Natural killer cell (primary cell): ENCODE measurements at regions of chr17 and their contacts with region 1.

Region 1: GRCh38 chr17:20116683-20117309 is 107.6 kb downstream of the SPECC1 start:
- DNase-seq: peak; percentile 19 to 85
- ATAC-seq: peak; percentile 77 to 91 (median 85)
- H3K4me3 ChIP-seq: no peak overlapping the region
- H3K4me3 Mint-ChIP-seq: no peak overlapping the region
- H3K27ac ChIP-seq: no peak overlapping the region
- H3K27ac Mint-ChIP-seq: no peak overlapping the region
- H3K4me1 ChIP-seq: no peaks in the 10 kb centered on the region
- H3K4me1 Mint-ChIP-seq: peaks cover 0 to 3% of the 10 kb centered on the region in 2 donors
- H3K27me3 ChIP-seq: no peaks in the 10 kb centered on the region
- H3K27me3 Mint-ChIP-seq: no peaks in the 10 kb centered on the region
- CTCF ChIP-seq: peak; percentile 84

Region 2: DNA sequence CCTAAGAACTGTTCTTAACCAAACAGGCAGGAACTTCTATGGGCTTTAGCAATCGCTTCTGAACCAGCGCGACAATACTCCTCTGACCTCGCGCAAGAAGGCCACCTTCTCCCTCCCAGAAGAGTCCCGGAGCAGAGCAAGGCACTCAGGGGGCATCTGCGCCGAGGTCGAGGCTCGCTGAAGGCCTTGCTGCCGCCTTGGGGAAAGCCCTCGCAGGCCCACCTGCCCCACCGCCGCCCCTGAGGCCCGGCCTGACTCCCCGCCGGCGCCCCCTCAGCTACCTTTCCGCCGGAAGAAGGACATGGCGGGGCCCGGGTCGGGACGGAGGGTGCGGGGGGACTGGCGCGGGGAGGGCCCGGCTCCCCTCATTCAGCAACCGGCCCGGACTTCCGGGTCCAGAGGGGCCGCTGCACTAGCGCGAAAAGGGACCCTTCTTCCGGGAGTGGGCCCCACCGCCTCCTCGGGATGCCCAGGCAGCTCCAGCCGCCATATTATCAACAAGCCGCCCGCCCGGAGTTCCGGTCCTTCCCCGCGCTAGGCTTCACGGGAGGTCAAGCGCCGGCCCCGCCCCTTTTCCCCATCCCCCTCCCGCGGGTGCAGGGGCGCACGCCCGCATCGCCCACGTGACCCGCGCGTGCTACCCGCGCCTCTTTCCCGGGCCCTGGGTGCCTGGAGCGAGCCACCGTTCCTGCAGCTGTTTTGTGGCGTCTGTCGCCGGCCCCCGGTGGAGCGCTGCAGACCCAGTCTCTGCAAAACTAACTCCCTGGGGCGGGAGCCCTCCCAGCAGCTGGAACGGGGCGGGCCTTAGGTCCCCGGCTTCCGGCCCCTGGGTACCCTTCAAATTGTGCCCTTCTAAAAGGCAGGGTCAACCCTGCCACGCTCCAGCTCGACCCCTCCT is 139.2 kb before region 1 on chr17 and contains the start of gene AKAP10:
- intact Hi-C with region 1: loop called (anchors 5 kb)
- DNase-seq: peak; percentile 91 to 92
- ATAC-seq: peak; percentile 90 to 94 (median 91)
- H3K4me3 ChIP-seq: peak within 1 kb of the TSS; percentile 71
- H3K4me3 Mint-ChIP-seq: peak within 1 kb of the TSS; percentile 98
- H3K27ac ChIP-seq: peak within 1 kb of the TSS; percentile 88
- H3K27ac Mint-ChIP-seq: peak within 1 kb of the TSS; percentile 95 to 96
- H3K4me1 ChIP-seq: peaks cover 20% of the 10 kb centered on the region
- H3K4me1 Mint-ChIP-seq: peaks cover 33 to 44% of the 10 kb centered on the region in 2 donors
- H3K27me3 ChIP-seq: no peaks in the 10 kb centered on the region
- H3K27me3 Mint-ChIP-seq: no peaks in the 10 kb centered on the region
- CTCF ChIP-seq: no peak
- total RNA-seq, gene AKAP10: 46.2 to 60.9 (median 48.6) TPM

Region 3: DNA sequence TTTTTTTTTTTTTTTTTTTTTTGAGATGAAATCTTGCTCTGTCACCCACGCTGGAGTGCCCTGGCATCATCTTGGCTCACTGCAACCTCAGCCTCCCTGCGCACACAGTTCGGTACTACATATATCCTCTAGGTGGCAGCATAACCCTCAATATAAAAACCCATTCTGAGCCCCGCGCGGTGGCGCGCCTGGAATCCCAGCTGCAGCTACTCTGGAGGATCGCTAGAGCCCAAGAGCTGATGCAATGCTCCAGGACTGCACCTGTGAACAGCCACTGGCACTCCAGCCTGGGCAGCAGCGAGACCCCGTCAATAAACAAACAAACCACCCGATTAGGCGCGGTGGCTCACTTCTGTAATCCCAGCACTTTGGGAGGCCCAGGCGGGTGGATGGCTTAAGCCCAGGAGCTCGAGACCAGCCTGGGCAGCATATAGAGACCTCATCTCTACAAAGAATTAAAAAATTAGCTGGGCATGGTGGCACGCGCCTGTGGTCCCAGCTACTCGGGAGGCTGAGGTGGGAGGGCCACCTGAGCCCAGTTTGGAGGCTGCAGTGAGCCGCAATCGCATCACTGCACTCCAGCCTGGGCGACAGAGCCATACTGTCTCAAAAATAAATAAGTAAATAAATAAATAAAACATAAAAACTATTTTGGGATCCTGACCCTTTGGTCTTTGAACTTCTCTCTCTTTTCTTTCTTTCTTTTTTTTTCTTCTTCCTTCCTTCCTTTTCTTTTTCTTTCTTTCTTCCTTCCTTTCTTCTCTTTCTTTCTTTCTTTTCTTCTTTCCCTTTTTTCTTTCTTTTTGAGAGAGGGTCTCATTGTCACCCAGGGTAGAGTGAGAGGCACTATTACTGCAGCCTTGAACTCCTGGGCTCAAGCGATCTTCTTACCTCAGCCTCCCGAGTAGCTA is 123.7 kb before region 1 on chr17:
- intact Hi-C with region 1: loop called (anchors 1 kb)
- DNase-seq: peak; percentile 63 to 89
- ATAC-seq: peak; percentile 96 to 100 (median 99)
- H3K4me3 ChIP-seq: no peak overlapping the region
- H3K4me3 Mint-ChIP-seq: no peak overlapping the region
- H3K27ac ChIP-seq: no peak overlapping the region
- H3K27ac Mint-ChIP-seq: no peak overlapping the region
- H3K4me1 ChIP-seq: peaks cover 5% of the 10 kb centered on the region
- H3K4me1 Mint-ChIP-seq: no peaks in the 10 kb centered on the region
- H3K27me3 ChIP-seq: no peaks in the 10 kb centered on the region
- H3K27me3 Mint-ChIP-seq: peaks cover 14 to 16% of the 10 kb centered on the region in 2 donors
- CTCF ChIP-seq: peak; percentile 81